Activated T-helper 2 cell treated with anti-CD3 and anti-CD28 coated beads, Interferon-gamma antibody, Interleukin-2, Interleukin-4, amounts not matched to agents 10 μg/mL and 5 μg/mL and 100 μg/mL, durations not matched to agents 14 hours and 24 hours and 36 hours (primary cell): ENCODE measurements at regions of chr14 and their contacts with region 1.

Region 1: DNA sequence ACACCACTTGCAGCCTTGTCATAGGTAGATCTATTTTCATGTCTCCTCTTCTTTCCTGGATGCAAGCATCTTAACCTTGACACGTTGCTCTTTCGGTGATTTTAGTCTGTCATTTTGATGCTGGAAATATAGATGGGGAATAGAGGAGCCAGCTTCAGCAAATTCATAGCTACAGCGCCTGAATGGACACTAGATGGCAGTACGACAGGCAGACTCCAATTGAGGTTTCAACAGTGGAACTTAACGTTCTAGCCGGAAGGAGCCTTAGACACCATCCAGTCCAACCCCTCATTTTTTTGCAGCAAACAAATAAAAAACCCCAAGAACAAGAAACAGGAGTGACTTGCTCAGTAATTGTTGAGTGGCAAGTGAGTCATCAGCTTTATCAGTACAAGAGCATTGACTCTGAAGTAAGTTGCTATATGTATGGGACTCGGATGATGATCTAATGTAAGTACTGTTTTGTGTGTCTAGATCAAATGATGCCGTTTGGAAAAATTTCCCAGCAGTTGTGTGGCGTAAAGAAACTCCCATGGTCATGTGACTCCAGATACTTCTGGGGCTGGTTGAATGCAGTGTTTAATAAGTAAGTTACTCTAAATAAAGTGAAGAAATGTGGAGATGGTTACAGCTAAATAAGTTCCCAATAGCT is 9.0 kb downstream of the DMAC2L start:
- DNase-seq: peak; percentile 67
- H3K4me3 Mint-ChIP-seq: no peak overlapping the region
- H3K27ac Mint-ChIP-seq: no peak overlapping the region
- H3K4me1 Mint-ChIP-seq: peaks cover 21% of the 10 kb centered on the region
- H3K27me3 Mint-ChIP-seq: no peaks in the 10 kb centered on the region

Region 2: GRCh38 chr14:50231475-50232275 is 89.5 kb before region 1 on chr14 and contains the start of gene SOS2:
- intact Hi-C with region 1: loop called (anchors 1 kb)
- DNase-seq: peak; percentile 80
- H3K4me3 Mint-ChIP-seq: peak within 1 kb of the TSS; percentile 92
- H3K27ac Mint-ChIP-seq: peak within 1 kb of the TSS; percentile 88
- H3K4me1 Mint-ChIP-seq: peaks cover 36% of the 10 kb centered on the region
- H3K27me3 Mint-ChIP-seq: peaks cover 4% of the 10 kb centered on the region
- total RNA-seq, gene SOS2: 17.0 and 20.7 TPM in 2 replicates

Region 3: DNA sequence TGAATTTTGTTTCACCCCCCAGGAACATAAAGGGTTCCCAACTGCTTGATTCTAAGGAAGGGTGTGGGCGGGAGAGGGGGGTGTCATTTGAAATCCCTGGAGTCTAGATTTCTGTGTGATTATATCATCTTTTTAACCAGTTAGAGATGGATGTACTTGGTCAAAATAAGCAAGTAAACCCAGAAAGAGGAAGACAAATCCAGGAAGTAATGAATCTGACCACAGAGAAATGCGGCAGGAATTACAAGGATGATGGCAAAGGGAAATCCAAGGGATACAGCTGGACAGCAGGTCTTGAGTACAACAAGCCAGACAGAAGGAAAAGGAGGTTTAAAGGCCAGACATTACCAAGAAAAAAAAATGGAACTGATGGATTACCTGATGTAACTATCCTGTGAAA is 29.9 kb after region 1 on chr14:
- intact Hi-C with region 1: no loop called
- DNase-seq: no peak
- H3K4me3 Mint-ChIP-seq: no peak overlapping the region
- H3K27ac Mint-ChIP-seq: no peak overlapping the region
- H3K4me1 Mint-ChIP-seq: no peaks in the 10 kb centered on the region
- H3K27me3 Mint-ChIP-seq: peaks cover 13% of the 10 kb centered on the region

Region 4: GRCh38 chr14:50363714-50364111 is 42.6 kb after region 1 on chr14:
- intact Hi-C with region 1: loop called (anchors 1 kb)
- DNase-seq: peak; percentile 59
- H3K4me3 Mint-ChIP-seq: peak overlapping the region; percentile 79
- H3K27ac Mint-ChIP-seq: peak overlapping the region; percentile 88
- H3K4me1 Mint-ChIP-seq: peaks cover 29% of the 10 kb centered on the region
- H3K27me3 Mint-ChIP-seq: no peaks in the 10 kb centered on the region

Region 5: DNA sequence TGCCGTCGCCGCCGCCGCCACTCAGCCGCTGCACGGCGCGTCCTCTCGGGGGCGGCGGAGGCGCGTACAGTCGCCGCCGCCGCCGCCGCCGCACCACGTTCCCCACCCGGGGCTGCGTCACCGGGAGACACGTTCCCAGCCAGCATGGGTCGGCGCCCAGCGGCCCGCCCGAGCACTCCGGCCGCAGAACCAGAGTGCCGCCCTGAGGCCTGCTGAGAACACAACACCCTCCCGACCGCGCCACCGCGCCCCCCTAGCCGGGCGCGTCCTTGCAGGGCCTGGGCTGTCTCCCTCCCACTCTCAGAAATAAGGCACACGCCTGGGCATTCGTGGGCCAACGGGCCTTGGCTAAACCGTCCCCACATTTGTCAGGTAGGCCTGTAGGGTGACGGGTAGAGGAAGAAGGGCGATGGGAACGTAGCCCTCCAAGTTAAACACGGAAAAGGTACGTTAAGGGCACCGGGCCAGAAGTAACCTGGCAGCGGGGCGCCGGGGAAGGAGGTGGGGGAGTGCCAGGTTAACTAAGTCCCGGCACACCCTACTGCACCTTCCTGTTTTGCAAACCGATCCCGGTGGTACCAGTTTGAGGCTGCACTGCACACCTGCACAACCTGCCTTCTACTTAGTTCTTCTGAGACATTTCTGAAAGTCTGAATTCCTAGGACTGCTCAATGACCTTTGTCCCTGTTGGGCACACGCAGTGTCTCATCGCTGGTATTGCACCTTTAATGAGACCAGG is 211.5 kb after region 1 on chr14 and contains the start of gene MAP4K5:
- intact Hi-C with region 1: loop called (anchors 1 kb)
- DNase-seq: peak; percentile 82
- H3K4me3 Mint-ChIP-seq: peak within 1 kb of the TSS; percentile 88
- H3K27ac Mint-ChIP-seq: peak within 1 kb of the TSS; percentile 51
- H3K4me1 Mint-ChIP-seq: peaks cover 30% of the 10 kb centered on the region
- H3K27me3 Mint-ChIP-seq: peaks cover 34% of the 10 kb centered on the region
- total RNA-seq, gene MAP4K5: 21.0 and 23.1 TPM in 2 replicates

Region 6: GRCh38 chr14:50773632-50774541 is 452.8 kb after region 1 on chr14:
- intact Hi-C with region 1: loop called (anchors 5 kb)
- DNase-seq: no peak
- H3K4me3 Mint-ChIP-seq: no peak overlapping the region
- H3K27ac Mint-ChIP-seq: no peak overlapping the region
- H3K4me1 Mint-ChIP-seq: peaks cover 15% of the 10 kb centered on the region
- H3K27me3 Mint-ChIP-seq: no peaks in the 10 kb centered on the region